ENCODE measurements at regions of chr3 and their contacts with region 1.

Region 1: GRCh38 chr3:62097121-62097520 is 276.2 kb downstream of the FEZF2 start:
- DNase-seq: no peak
- ATAC-seq: peak; percentile 76 to 86

Region 2: DNA sequence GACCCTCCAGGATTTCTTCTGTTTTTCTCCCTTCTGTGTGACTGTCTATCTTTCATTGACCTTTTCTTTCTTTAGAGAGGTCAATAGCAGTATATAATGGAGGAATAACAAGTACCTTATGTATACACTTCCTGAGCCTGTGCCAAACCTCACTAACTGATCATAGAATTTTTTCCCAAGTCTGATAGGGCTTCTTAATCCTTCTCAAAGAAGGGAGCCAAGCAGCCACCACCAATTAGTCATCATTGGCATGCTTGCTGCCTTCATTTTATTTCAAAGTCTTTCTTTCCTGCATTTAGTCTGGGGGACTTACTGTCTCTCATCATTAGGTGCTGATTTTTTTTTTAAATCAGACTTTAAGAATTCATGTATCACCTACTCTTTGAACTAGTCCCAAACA is 50.8 kb before region 1 on chr3:
- intact Hi-C with region 1: no loop called
- DNase-seq: no peak
- ATAC-seq: no peak

Region 3: GRCh38 chr3:62159709-62160092 is 62.6 kb after region 1 on chr3:
- intact Hi-C with region 1: loop called in 1 of 2 experiments (anchors 10 kb)
- DNase-seq: peak; percentile 86
- ATAC-seq: peak; percentile 93 to 95